ENCODE measurements at regions of chr19 and their contacts with region 1.

Region 1: DNA sequence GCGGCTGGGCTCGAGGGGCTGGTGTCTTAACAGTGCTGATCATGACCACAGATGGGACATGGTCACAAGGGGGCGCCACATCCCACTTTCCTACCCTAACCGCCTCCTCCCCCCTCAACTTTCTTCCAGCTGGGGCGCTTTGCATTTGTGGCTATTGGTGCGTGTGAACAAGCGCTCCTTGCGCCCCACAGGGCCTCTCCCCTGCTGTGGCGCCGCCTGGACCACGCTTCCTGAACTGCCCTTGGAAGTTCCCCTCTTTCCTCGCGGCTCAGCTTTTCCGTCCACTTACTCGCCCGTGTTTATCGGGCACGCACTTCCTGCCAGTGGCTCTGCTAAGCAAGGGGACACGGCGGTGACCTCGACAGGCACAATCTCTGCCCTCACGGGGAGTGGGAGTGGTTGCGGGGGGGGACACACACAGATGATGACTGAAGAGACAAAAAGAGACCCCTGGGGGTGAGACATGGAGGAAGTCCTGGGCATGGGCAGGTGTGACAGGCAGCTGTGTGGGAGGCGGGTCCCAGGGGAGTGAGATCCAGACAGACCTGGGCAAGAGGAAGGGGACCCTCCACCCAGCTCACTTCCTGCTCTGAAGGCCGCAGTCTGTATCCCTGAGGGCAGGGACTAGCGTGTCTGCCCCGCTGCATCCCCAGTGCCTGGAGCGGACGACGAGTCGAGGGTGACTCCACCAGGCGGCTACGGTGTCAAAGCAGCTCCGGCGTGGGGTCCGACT is 40.3 kb downstream of the ZNF787 start:
- DNase-seq: peak; percentile 84
- H3K4me3 Mint-ChIP-seq: peak overlapping the region; percentile 41
- H3K27ac Mint-ChIP-seq: no peak overlapping the region
- H3K4me1 Mint-ChIP-seq: peaks cover 10% of the 10 kb centered on the region
- H3K27me3 Mint-ChIP-seq: peaks cover 17% of the 10 kb centered on the region

Region 2: GRCh38 chr19:56015756-56016155 is 65.1 kb before region 1 on chr19:
- CTCF ChIA-PET with region 1: no interaction called
- intact Hi-C with region 1: no loop called
- DNase-seq: no peak
- H3K4me3 Mint-ChIP-seq: no peak overlapping the region
- H3K27ac Mint-ChIP-seq: no peak overlapping the region
- H3K4me1 Mint-ChIP-seq: no peaks in the 10 kb centered on the region
- H3K27me3 Mint-ChIP-seq: no peaks in the 10 kb centered on the region

Region 3: DNA sequence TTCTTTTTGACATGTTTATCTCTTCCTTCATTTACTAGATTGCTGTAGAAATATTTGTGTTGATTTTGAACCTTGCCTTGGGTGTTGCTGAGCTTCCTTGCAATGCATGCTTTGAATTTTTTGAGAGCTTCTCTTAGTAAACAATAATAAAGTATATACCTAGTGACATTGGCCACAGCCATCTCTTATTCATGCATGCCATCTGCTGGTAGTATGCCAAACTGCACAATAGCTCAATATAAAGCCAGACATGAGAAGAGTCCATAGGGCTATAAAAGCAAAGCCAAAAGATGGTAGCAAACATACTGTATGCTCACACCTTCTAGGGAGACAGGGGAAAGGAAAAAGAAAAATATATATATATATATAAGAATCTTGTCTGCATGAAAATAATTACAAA is 252.7 kb after region 1 on chr19:
- CTCF ChIA-PET with region 1: interaction called, 7 read pairs
- intact Hi-C with region 1: loop called (anchors 2 kb)
- DNase-seq: peak; percentile 66
- H3K4me3 Mint-ChIP-seq: no peak overlapping the region
- H3K27ac Mint-ChIP-seq: no peak overlapping the region
- H3K4me1 Mint-ChIP-seq: no peaks in the 10 kb centered on the region
- H3K27me3 Mint-ChIP-seq: no peaks in the 10 kb centered on the region